ENCODE measurements at regions of chr17 and their contacts with region 1.

Region 1: DNA sequence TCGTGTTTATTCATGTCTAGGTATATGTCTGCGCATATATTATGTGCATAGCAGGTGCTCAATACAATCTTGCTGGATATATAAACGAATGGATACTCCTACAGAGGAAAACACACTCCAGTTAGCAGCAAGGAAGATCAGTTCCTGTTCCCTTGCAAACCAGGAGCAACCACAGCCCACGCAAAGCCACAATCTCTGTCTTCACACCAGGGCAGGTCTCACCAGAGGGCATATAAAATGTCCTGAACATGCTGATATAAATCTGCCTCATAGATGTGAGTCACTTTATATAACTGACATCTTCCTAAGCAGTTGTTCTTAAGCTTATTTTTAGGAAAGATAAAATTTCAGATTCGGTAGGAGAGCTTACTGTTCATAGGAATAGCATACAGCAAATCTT is 101.5 kb upstream of the PIRT start:
- DNase-seq: no peak
- H3K4me3 ChIP-seq: no peak overlapping the region
- H3K27ac ChIP-seq: no peak overlapping the region
- H3K4me1 ChIP-seq: no peaks in the 10 kb centered on the region
- H3K27me3 ChIP-seq: no peaks in the 10 kb centered on the region
- CTCF ChIP-seq: no peak
- EP300 ChIP-seq: no peak
- POLR2A ChIP-seq: no peak

Region 2: GRCh38 chr17:9346296-9346926 is 1593.0 kb before region 1 on chr17:
- intact Hi-C with region 1: no loop called
- DNase-seq: no peak
- H3K4me3 ChIP-seq: no peak overlapping the region
- H3K27ac ChIP-seq: no peak overlapping the region
- H3K4me1 ChIP-seq: no peaks in the 10 kb centered on the region
- H3K27me3 ChIP-seq: no peaks in the 10 kb centered on the region
- CTCF ChIP-seq: no peak
- EP300 ChIP-seq: no peak
- POLR2A ChIP-seq: no peak

Region 3: DNA sequence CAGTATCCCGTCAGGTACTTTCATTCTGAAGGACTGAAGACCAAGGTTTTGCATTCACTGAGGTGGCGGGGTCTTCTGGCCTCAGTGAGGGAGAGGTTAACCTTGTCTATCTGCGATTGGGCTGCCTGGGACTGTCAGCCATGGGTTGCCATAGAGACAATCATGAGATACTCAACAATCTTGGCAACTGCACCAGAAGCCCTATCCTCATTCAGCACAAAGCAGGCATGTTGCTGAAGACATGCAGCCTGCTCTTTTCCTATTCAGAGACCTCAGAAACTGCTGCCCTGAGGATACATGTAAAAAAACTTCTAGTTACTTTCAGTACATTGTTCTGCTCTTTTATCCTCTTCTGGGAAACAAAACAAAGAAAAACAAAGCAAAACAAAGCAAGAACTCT is 44.9 kb after region 1 on chr17:
- intact Hi-C with region 1: loop called in 1 of 4 experiments (anchors 10 kb)
- DNase-seq: no peak
- H3K4me3 ChIP-seq: no peak overlapping the region
- H3K27ac ChIP-seq: no peak overlapping the region
- H3K4me1 ChIP-seq: no peaks in the 10 kb centered on the region
- H3K27me3 ChIP-seq: no peaks in the 10 kb centered on the region
- CTCF ChIP-seq: no peak
- EP300 ChIP-seq: no peak
- POLR2A ChIP-seq: no peak